Activated CD8-positive, alpha-beta T cell treated with anti-CD3 and anti-CD28 coated beads for 36 hours (primary cell): ENCODE measurements at regions of chr9 and their contacts with region 1.

Region 1: DNA sequence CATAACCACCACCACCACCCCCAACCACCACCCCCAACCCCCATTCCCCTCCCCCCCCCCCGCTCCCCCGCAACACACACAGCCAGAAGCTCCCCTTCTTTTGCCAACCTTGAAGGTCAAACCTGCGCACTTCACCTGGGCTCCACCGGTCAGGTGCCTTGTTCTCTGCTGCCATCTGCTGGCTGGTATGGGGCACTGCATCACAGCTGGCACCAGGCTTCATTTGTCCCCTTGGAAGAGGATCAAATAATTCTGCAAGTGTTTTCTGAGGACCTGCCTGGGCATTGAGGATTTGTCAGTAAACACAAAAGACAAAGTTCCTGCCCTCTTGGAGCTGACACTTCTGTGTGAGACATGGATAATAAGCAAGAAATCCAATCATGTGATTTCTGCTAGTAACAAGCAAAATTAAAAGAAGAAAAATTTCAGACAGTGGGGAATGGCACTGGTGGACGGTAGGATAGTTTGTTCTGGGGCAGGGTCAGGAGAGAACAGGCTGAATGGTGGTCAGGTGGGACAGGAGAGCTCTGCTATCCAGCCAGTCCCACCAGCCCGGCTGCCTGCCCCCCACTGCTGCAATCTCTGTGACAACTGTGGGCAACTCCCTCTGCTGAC is 55.6 kb upstream of the LMX1B start:
- DNase-seq: peak; percentile 76
- ATAC-seq: peak; percentile 97
- H3K4me3 Mint-ChIP-seq: no peak overlapping the region
- H3K27ac Mint-ChIP-seq: no peak overlapping the region
- H3K4me1 Mint-ChIP-seq: no peaks in the 10 kb centered on the region
- H3K27me3 Mint-ChIP-seq: peaks cover 26% of the 10 kb centered on the region
- CTCF ChIP-seq: peak; percentile 87

Region 2: DNA sequence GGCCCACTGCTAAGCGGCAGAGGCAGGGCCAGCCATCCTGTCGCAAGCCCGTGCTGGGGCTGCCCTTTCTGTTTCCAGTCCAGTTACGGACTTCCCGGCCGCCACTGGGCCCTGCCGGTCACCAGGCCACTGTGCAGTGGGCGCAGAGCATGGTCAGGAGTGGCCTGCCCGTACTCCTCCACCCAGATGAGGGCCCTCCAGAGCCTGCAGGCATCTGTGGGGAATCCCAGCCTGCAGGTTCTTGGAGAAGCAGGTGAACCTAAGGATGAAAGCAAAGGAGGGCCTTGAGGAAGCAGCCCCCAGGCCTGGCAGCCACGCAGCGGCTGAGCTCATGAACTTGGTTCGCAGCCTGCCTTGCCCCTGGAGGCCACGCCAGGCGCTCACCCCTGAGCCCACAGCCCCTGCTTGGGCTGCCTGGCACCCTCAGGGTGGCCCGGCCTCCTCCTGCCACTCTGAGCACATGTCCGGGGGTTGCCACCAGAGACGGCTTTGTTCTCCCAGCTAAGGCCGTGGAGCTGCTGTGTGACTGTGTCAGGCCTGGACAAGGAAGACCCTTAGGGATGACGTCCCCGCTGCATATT is 51.7 kb before region 1 on chr9:
- CTCF ChIA-PET with region 1: interaction called, 198 read pairs
- POLR2A ChIA-PET with region 1: interaction called, 4 read pairs
- intact Hi-C with region 1: loop called (anchors 2 kb)
- DNase-seq: no peak
- ATAC-seq: no peak
- H3K4me3 Mint-ChIP-seq: no peak overlapping the region
- H3K27ac Mint-ChIP-seq: no peak overlapping the region
- H3K4me1 Mint-ChIP-seq: no peaks in the 10 kb centered on the region
- H3K27me3 Mint-ChIP-seq: no peaks in the 10 kb centered on the region
- CTCF ChIP-seq: no peak

Region 3: GRCh38 chr9:126514047-126514821 is 43.9 kb before region 1 on chr9:
- CTCF ChIA-PET with region 1: interaction called, 99 read pairs
- POLR2A ChIA-PET with region 1: no interaction called
- intact Hi-C with region 1: loop called (anchors 5 kb)
- DNase-seq: peak; percentile 70
- ATAC-seq: peak; percentile 75
- H3K4me3 Mint-ChIP-seq: no peak overlapping the region
- H3K27ac Mint-ChIP-seq: no peak overlapping the region
- H3K4me1 Mint-ChIP-seq: peaks cover 28% of the 10 kb centered on the region
- H3K27me3 Mint-ChIP-seq: peaks cover 52% of the 10 kb centered on the region
- CTCF ChIP-seq: peak; percentile 64

Region 4: GRCh38 chr9:126526218-126527108 is 31.7 kb before region 1 on chr9:
- CTCF ChIA-PET with region 1: interaction called, 12 read pairs
- POLR2A ChIA-PET with region 1: no interaction called
- intact Hi-C with region 1: no loop called
- DNase-seq: no peak
- ATAC-seq: no peak
- H3K4me3 Mint-ChIP-seq: no peak overlapping the region
- H3K27ac Mint-ChIP-seq: no peak overlapping the region
- H3K4me1 Mint-ChIP-seq: peaks cover 14% of the 10 kb centered on the region
- H3K27me3 Mint-ChIP-seq: peaks cover 9% of the 10 kb centered on the region
- CTCF ChIP-seq: no peak

Region 5: GRCh38 chr9:126532019-126532462 is 26.1 kb before region 1 on chr9:
- CTCF ChIA-PET with region 1: interaction called, 12 read pairs
- POLR2A ChIA-PET with region 1: no interaction called
- intact Hi-C with region 1: no loop called
- DNase-seq: no peak
- ATAC-seq: no peak
- H3K4me3 Mint-ChIP-seq: no peak overlapping the region
- H3K27ac Mint-ChIP-seq: no peak overlapping the region
- H3K4me1 Mint-ChIP-seq: no peaks in the 10 kb centered on the region
- H3K27me3 Mint-ChIP-seq: peaks cover 2% of the 10 kb centered on the region
- CTCF ChIP-seq: no peak